HEK293 (cell line): ENCODE measurements at regions of chr6 and their contacts with region 1.

Region 1: DNA sequence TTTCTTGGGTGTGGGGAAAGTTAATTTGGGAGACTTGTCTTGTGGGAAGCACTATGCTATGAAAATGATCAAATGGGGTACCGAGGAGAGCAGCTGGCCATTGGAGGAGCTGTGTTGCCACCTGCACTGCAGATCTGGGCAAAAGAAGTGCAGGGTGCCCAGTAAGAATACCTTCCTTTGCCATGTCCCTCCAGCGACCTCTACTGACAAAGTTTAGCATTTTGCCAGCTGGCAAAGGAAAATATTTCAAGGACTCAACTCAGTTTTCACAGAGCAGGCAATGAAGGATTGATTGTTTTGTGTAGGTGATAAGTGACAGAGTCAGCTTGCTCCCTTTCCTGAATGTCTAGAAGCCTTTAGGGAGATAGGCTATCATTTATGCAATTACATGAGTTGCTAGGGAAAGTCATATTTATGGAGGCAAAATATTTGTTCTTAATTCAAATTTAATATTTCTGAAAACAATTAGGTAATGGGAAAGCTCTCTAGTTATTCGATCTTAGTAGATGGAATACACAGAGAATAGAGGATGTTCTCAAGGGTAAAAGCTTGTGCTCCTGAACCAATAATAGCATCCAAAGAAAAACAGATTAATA is 118.4 kb downstream of the FARS2 start:
- H3K4me3 ChIP-seq: no peak overlapping the region
- H3K27ac ChIP-seq: no peak overlapping the region
- H3K4me1 ChIP-seq: no peaks in the 10 kb centered on the region
- CTCF ChIP-seq: peak; percentile 73

Region 2: GRCh38 chr6:5058254-5058653 is 321.5 kb before region 1 on chr6:
- CTCF ChIA-PET with region 1: interaction called, 24 read pairs
- POLR2A ChIA-PET with region 1: no interaction called
- H3K4me3 ChIP-seq: no peak overlapping the region
- H3K27ac ChIP-seq: no peak overlapping the region
- H3K4me1 ChIP-seq: no peaks in the 10 kb centered on the region
- CTCF ChIP-seq: no peak

Region 3: GRCh38 chr6:5214570-5215052 is 165.1 kb before region 1 on chr6:
- CTCF ChIA-PET with region 1: interaction called, 102 read pairs
- POLR2A ChIA-PET with region 1: no interaction called
- H3K4me3 ChIP-seq: no peak overlapping the region
- H3K27ac ChIP-seq: no peak overlapping the region
- H3K4me1 ChIP-seq: no peaks in the 10 kb centered on the region
- CTCF ChIP-seq: peak; percentile 77

Region 4: GRCh38 chr6:5365436-5366195 is 14.1 kb before region 1 on chr6:
- CTCF ChIA-PET with region 1: interaction called, 27 read pairs
- POLR2A ChIA-PET with region 1: no interaction called
- H3K4me3 ChIP-seq: no peak overlapping the region
- H3K27ac ChIP-seq: no peak overlapping the region
- H3K4me1 ChIP-seq: no peaks in the 10 kb centered on the region
- CTCF ChIP-seq: no peak

Region 5: GRCh38 chr6:5394280-5394679 is 14.5 kb after region 1 on chr6:
- CTCF ChIA-PET with region 1: interaction called, 25 read pairs
- POLR2A ChIA-PET with region 1: no interaction called
- H3K4me3 ChIP-seq: no peak overlapping the region
- H3K27ac ChIP-seq: no peak overlapping the region
- H3K4me1 ChIP-seq: no peaks in the 10 kb centered on the region
- CTCF ChIP-seq: no peak

Region 6: GRCh38 chr6:5401845-5402738 is 22.3 kb after region 1 on chr6:
- CTCF ChIA-PET with region 1: interaction called, 17 read pairs
- POLR2A ChIA-PET with region 1: no interaction called
- H3K4me3 ChIP-seq: no peak overlapping the region
- H3K27ac ChIP-seq: no peak overlapping the region
- H3K4me1 ChIP-seq: no peaks in the 10 kb centered on the region
- CTCF ChIP-seq: 0 out of 2 replicates have a peak, but pooled peaks have one; percentile 23